Panc1 (cell line): ENCODE measurements at regions of chr19 and their contacts with region 1.

Region 1: GRCh38 chr19:38387550-38388348 is at the start of gene GGN:
- DNase-seq: peak; percentile 94
- ATAC-seq: peak; percentile 83
- H3K4me3 ChIP-seq: peak within 1 kb of the TSS; percentile 55 to 93
- H3K27ac ChIP-seq: peak within 1 kb of the TSS; percentile 76
- H3K4me1 ChIP-seq: peaks cover 11% of the 10 kb centered on the region
- H3K27me3 ChIP-seq: no peaks in the 10 kb centered on the region
- CTCF ChIP-seq: no peak
- total RNA-seq, gene GGN: 1.4 TPM

Region 2: DNA sequence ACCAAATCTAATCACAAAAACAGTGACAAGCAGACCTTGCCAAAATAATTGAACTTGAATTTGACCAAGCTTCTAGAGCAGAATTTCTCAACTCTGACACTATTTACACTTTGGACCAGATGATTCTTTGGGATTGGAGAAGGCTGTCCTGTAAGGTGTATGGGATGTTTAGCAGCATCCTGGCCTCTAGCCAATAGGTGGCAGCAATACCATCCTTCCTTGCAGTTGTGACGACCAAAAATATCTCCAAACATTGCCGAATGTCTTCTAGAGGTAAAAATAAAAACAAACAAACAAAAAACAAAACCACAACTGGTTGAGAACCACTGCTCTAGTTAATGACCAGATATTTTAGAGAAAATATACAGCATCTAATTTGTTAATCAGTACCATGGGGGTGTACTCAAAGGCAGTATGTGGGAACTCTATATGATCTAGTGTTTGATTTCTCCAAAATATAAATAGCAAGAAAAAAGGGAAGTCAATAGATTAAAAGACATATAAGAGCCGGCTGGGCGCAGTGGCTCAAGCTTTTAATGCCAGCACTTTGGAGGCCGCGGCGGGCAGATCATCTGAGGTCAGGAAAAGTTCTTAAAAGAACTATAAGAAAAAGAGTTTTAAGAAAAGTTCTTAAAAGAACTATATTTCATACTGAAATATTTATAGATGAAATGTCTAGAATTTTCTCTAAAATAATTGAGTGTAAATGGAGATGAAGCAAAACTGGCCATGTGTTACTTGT is 1077.7 kb before region 1 on chr19:
- CTCF ChIA-PET with region 1: no interaction called
- POLR2A ChIA-PET with region 1: no interaction called
- in situ Hi-C with region 1: no loop called
- intact Hi-C with region 1: no loop called
- DNase-seq: no peak
- ATAC-seq: no peak
- H3K4me3 ChIP-seq: no peak overlapping the region
- H3K27ac ChIP-seq: no peak overlapping the region
- H3K4me1 ChIP-seq: peaks cover 7% of the 10 kb centered on the region
- H3K27me3 ChIP-seq: no peaks in the 10 kb centered on the region
- CTCF ChIP-seq: peak; percentile 31

Region 3: GRCh38 chr19:38173291-38174041 is 214.3 kb before region 1 on chr19:
- CTCF ChIA-PET with region 1: no interaction called
- POLR2A ChIA-PET with region 1: no interaction called
- in situ Hi-C with region 1: no loop called
- intact Hi-C with region 1: no loop called
- DNase-seq: no peak
- ATAC-seq: no peak; the same call in 1 of the 2 replicates
- H3K4me3 ChIP-seq: no peak overlapping the region
- H3K27ac ChIP-seq: no peak overlapping the region
- H3K4me1 ChIP-seq: no peaks in the 10 kb centered on the region
- H3K27me3 ChIP-seq: no peaks in the 10 kb centered on the region
- CTCF ChIP-seq: no peak

Region 4: DNA sequence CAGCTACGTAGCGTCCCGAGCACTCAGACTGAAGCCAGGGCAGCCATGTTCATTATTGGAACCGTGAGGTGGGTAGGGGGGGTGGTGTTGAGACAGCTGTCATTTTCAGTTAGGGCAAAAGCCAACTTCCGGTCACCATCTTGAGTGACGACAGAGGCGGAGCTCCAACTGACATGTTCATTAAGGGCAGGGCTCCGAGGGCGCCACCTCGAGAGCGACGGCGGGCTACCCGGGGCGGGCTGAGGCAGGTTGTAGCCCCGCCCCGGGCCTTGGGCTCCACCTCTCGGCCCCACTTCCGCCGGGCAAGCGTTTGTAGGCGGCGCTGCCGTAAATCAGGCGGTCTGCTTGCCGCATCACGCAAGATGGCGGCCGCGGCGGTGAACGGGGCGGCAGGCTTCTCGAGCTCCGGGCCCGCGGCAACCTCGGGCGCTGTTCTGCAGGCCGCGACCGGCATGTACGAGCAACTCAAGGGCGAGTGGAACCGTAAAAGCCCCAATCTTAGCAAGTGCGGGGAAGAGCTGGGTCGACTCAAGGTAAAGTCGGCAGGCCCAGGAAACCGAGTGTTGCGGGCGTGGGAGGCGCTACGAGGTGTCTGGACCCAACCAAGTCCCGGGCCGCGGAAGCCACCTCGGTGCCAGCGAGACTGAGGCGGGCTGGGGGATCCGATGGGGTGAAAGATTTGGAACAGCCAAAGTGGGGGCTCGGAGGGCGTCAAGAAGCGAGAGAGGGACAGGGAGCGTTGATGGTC is 13.1 kb before region 1 on chr19 and contains the start of gene PSMD8:
- CTCF ChIA-PET with region 1: interaction called, 13 read pairs
- POLR2A ChIA-PET with region 1: interaction called, 6 read pairs
- in situ Hi-C with region 1: no loop called
- intact Hi-C with region 1: no loop called
- DNase-seq: peak; percentile 97
- ATAC-seq: peak; percentile 99
- H3K4me3 ChIP-seq: peak within 1 kb of the TSS; percentile 85 to 87
- H3K27ac ChIP-seq: peak within 1 kb of the TSS; percentile 92
- H3K4me1 ChIP-seq: peaks cover 10% of the 10 kb centered on the region
- H3K27me3 ChIP-seq: no peaks in the 10 kb centered on the region
- CTCF ChIP-seq: no peak
- total RNA-seq, gene PSMD8: 388 TPM

Region 5: DNA sequence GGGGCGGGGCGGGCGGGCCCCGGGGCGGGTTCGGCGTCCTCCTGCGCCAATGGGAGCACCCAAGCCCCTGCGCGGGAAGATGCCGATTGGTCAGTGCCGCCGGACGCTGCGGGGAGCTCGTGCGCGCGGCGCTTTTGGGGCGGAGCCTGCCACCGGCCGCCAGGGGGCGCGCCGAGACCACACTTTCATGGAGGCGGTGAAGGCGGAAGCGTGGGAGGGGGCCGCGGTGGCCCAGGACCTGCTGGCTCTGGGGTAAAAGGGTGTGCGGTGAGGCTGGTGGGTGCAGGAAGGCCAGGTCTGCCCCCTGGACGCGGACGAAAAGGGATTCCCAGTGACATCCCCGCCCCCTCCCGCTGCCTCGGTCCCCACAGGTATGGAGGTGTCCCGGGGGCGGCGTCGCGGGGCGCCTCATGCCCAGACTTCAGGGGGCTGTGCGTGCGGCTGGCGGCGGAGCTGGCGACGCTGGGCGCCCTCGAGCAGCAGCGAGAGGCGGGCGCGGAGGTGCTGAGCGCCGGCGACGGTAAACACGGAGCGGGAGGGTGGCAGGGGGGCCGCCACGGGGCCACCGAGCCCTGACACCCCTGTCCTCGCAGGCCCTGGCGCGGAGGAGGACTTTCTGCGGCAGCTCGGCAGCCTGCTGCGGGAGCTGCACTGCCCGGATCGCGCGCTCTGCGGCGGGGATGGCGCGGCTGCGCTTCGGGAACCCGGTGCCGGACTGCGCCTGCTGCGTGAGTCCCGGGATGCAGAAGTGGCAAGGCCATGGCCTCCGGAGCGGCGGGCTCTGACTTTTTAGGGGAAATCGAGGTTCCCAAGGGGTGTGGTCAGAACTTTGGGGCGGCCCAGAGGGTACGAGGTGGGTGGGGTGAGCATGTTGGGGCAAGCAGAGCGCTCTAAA is 15.5 kb after region 1 on chr19 and contains the start of gene FAM98C:
- CTCF ChIA-PET with region 1: interaction called, 20 read pairs
- POLR2A ChIA-PET with region 1: interaction called, 3 read pairs
- in situ Hi-C with region 1: no loop called
- intact Hi-C with region 1: no loop called
- DNase-seq: peak; percentile 81
- ATAC-seq: peak; percentile 98
- H3K4me3 ChIP-seq: peak within 1 kb of the TSS; percentile 73 to 87
- H3K27ac ChIP-seq: peak within 1 kb of the TSS; percentile 69
- H3K4me1 ChIP-seq: peaks cover 3% of the 10 kb centered on the region; the same call in 1 of the 2 replicates
- H3K27me3 ChIP-seq: no peaks in the 10 kb centered on the region
- CTCF ChIP-seq: peak; percentile 99
- total RNA-seq, gene FAM98C: 24.7 TPM

Region 6: DNA sequence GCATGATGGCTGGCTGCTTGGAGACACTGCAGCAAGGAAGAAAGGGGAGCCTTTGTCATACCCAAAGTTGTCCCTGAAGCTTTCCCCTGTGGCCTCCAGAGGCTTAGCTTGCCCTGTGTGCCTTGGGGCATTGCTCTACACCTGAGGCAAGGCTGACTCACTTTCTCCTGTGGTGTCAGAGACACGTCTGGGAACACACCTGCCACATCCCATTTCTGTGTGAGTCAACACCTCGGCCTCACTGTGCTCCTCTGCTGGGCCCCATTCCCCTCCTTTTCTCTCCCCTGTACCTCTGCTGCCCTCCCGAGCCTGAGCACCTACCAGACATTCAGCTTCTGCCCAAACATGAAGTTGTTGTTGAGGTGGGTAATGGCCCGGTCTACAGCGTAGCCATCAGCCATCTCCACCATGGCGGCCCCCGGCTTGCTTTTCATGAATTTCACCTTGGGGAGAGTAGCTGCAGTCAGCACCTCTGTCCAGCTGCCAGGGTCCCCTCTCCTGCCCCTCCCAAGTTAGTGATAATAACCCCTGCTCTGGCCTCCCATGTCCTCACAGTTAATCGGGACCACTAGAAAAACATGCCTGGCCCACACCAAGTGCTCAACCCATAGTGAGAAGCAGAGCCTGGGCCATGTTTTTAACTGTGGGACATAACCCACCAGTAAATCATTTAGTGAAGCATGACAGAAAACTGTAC is 451.0 kb after region 1 on chr19:
- CTCF ChIA-PET with region 1: no interaction called
- POLR2A ChIA-PET with region 1: interaction called, 24 read pairs
- in situ Hi-C with region 1: no loop called
- intact Hi-C with region 1: no loop called
- DNase-seq: no peak
- ATAC-seq: peak; percentile 39
- H3K4me3 ChIP-seq: no peak overlapping the region
- H3K27ac ChIP-seq: peak overlapping the region; percentile 86
- H3K4me1 ChIP-seq: peaks cover 98% of the 10 kb centered on the region
- H3K27me3 ChIP-seq: no peaks in the 10 kb centered on the region
- CTCF ChIP-seq: no peak